Naive thymus-derived CD4-positive, alpha-beta T cell (primary cell): ENCODE measurements at regions of chr22 and their contacts with region 1.

Region 1: GRCh38 chr22:18077639-18078328 is at the start of gene PEX26:
- DNase-seq: peak; percentile 85 to 96 (median 95)
- ATAC-seq: peak; percentile 99
- H3K4me3 ChIP-seq: peak within 1 kb of the TSS; percentile 96
- H3K4me3 Mint-ChIP-seq: peak within 1 kb of the TSS; percentile 94 to 100 (median 97)
- H3K27ac ChIP-seq: peak within 1 kb of the TSS; percentile 80
- H3K27ac Mint-ChIP-seq: peak within 1 kb of the TSS; percentile 93 to 99 (median 98)
- H3K4me1 ChIP-seq: peaks cover 19 to 27% of the 10 kb centered on the region in 2 donors
- H3K4me1 Mint-ChIP-seq: peaks cover 22 to 66% (median 61%) of the 10 kb centered on the region in 7 donors
- H3K27me3 ChIP-seq: no peaks in the 10 kb centered on the region
- H3K27me3 Mint-ChIP-seq: no peaks in the 10 kb centered on the region
- total RNA-seq, gene PEX26: 30.1 to 42.8 (median 35.5) TPM

Region 2: GRCh38 chr22:17158568-17159503 is 918.9 kb before region 1 on chr22 and contains the start of gene HDHD5:
- CTCF ChIA-PET with region 1: no interaction called
- POLR2A ChIA-PET with region 1: no interaction called
- intact Hi-C with region 1: loop called in 1 of 2 experiments (anchors 1 kb)
- DNase-seq: peak; percentile 71 to 87 (median 84)
- ATAC-seq: peak; percentile 96
- H3K4me3 ChIP-seq: peak within 1 kb of the TSS; percentile 79
- H3K4me3 Mint-ChIP-seq: peak within 1 kb of the TSS; percentile 80 to 91 (median 88)
- H3K27ac ChIP-seq: peak within 1 kb of the TSS; percentile 79
- H3K27ac Mint-ChIP-seq: peak within 1 kb of the TSS in 8 of 9 donors; percentile 36 to 88 (median 76)
- H3K4me1 ChIP-seq: peaks cover 18 to 26% of the 10 kb centered on the region in 2 donors
- H3K4me1 Mint-ChIP-seq: peaks cover 18 to 48% (median 36%) of the 10 kb centered on the region in 7 donors
- H3K27me3 ChIP-seq: no peaks in the 10 kb centered on the region
- H3K27me3 Mint-ChIP-seq: no peaks in the 10 kb centered on the region
- total RNA-seq, gene HDHD5: 18.8 to 50.9 (median 26.2) TPM

Region 3: DNA sequence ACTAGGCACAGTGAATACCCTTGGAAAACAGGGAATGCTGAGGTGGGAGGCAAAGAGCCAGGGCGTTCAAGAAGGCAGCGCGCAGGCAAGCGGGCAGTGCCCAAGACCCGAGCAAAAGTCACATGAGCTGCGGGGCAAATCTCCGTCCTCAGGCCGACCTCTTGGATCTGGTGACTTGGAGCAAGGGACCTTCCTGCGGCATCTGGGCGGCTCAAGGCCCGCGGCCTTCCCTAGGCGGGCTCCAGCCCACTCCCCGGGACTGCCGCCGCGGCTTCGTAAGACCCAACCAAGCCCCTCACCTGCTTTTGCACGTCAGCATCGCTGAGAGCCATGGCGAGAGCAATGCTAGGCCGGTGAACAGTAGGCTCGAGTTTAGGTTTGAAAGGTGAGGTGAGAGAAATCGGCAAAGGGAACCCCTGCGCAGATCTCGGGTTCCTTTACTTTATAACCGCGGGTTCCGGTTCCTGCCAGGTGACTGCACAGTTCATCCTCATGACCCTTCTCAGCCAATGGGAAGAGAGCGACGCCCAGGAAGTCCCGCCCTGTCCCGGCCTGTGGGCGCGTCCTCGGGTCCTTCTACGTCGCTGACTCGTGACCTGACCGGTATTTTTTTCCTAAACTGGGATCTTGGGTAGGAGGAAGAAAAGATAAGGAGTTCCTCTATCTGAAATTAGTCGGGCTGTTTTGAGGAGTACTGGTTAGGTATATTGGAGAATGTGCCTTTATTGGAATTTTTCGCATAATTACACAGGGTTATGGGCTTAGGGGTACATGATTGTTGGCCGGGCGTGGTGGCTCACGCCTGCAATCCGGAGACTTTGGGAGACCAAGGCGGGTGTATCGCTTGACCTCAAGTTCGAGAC is 449.2 kb before region 1 on chr22 and contains the start of gene ATP6V1E1:
- CTCF ChIA-PET with region 1: no interaction called
- POLR2A ChIA-PET with region 1: no interaction called
- intact Hi-C with region 1: loop called (anchors 1 kb)
- DNase-seq: peak; percentile 82 to 96 (median 94)
- ATAC-seq: peak; percentile 100
- H3K4me3 ChIP-seq: peak within 1 kb of the TSS; percentile 100
- H3K4me3 Mint-ChIP-seq: peak within 1 kb of the TSS; percentile 89 to 99 (median 96)
- H3K27ac ChIP-seq: peak within 1 kb of the TSS; percentile 97
- H3K27ac Mint-ChIP-seq: peak within 1 kb of the TSS; percentile 90 to 99 (median 97)
- H3K4me1 ChIP-seq: peaks cover 13 to 14% of the 10 kb centered on the region in 2 donors
- H3K4me1 Mint-ChIP-seq: peaks cover 7 to 40% (median 31%) of the 10 kb centered on the region in 7 donors
- H3K27me3 ChIP-seq: no peaks in the 10 kb centered on the region
- H3K27me3 Mint-ChIP-seq: no peaks in the 10 kb centered on the region
- total RNA-seq, gene ATP6V1E1: 51.0 to 101 (median 80.4) TPM

Region 4: DNA sequence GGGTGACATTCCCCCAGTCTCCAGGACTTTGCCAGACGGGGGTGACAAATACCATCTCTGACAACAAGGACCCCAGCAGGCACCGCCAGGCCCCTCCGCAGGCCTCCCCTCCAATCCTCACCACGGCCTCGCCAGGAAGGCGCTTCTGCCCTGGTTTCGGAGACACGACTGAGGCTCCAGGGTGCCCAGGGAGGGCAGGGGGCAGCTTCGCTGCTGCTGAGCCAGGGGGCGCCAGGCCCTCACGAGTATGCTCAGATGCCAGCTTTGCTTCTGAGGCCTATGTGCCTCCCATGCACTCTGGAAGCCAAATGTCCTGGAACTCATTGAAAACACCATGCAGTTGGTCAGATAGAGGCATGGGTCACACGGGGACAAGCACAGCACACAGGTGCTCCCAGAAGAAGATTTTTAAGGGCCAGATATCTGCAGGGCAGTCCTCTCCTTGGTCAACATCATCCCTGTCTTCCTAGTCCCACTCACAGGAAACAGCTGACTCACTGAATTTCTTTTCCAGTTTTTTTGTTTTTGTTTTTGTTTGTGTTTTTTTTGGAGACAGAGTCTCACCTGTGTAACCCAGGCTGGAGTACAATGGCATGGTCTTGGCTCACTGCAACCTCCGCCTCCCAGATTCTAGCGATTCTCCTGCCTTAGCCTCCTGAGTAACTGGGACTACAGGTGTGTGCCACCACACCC is 323.4 kb before region 1 on chr22:
- CTCF ChIA-PET with region 1: no interaction called
- POLR2A ChIA-PET with region 1: no interaction called
- intact Hi-C with region 1: loop called in 1 of 2 experiments (anchors 1 kb)
- DNase-seq: peak in 4 of 9 donors; percentile 24 to 45 (median 30)
- ATAC-seq: peak; percentile 54
- H3K4me3 ChIP-seq: no peak overlapping the region
- H3K4me3 Mint-ChIP-seq: no peak overlapping the region
- H3K27ac ChIP-seq: no peak overlapping the region
- H3K27ac Mint-ChIP-seq: peak overlapping the region in 3 of 9 donors; percentile 38 to 43 (median 40)
- H3K4me1 ChIP-seq: no peaks in the 10 kb centered on the region
- H3K4me1 Mint-ChIP-seq: peaks cover 0 to 23% (median 7%) of the 10 kb centered on the region in 7 donors
- H3K27me3 ChIP-seq: no peaks in the 10 kb centered on the region
- H3K27me3 Mint-ChIP-seq: no peaks in the 10 kb centered on the region

Region 5: GRCh38 chr22:17888855-17889254 is 188.9 kb before region 1 on chr22:
- CTCF ChIA-PET with region 1: no interaction called
- POLR2A ChIA-PET with region 1: no interaction called
- intact Hi-C with region 1: loop called in 1 of 2 experiments (anchors 5 kb)
- DNase-seq: no peak
- ATAC-seq: no peak
- H3K4me3 ChIP-seq: no peak overlapping the region
- H3K4me3 Mint-ChIP-seq: no peak overlapping the region
- H3K27ac ChIP-seq: no peak overlapping the region
- H3K27ac Mint-ChIP-seq: no peak overlapping the region
- H3K4me1 ChIP-seq: no peaks in the 10 kb centered on the region
- H3K4me1 Mint-ChIP-seq: no peaks in the 10 kb centered on the region
- H3K27me3 ChIP-seq: no peaks in the 10 kb centered on the region
- H3K27me3 Mint-ChIP-seq: no peaks in the 10 kb centered on the region

Region 6: GRCh38 chr22:18152519-18152918 is 74.7 kb after region 1 on chr22:
- CTCF ChIA-PET with region 1: interaction called, 3 read pairs
- POLR2A ChIA-PET with region 1: interaction called, 9 read pairs
- intact Hi-C with region 1: loop called (anchors 1 kb)
- DNase-seq: peak in 2 of 9 donors; percentile 14 to 38
- ATAC-seq: no peak
- H3K4me3 ChIP-seq: no peak overlapping the region
- H3K4me3 Mint-ChIP-seq: peak overlapping the region; percentile 63 to 90 (median 72)
- H3K27ac ChIP-seq: no peak overlapping the region
- H3K27ac Mint-ChIP-seq: peak overlapping the region; percentile 16 to 92 (median 78)
- H3K4me1 ChIP-seq: peaks cover 9 to 32% of the 10 kb centered on the region in 2 donors
- H3K4me1 Mint-ChIP-seq: peaks cover 31 to 70% (median 51%) of the 10 kb centered on the region in 7 donors
- H3K27me3 ChIP-seq: no peaks in the 10 kb centered on the region
- H3K27me3 Mint-ChIP-seq: no peaks in the 10 kb centered on the region